ENCODE measurements at regions of chr4 and their contacts with region 1.

Region 1: DNA sequence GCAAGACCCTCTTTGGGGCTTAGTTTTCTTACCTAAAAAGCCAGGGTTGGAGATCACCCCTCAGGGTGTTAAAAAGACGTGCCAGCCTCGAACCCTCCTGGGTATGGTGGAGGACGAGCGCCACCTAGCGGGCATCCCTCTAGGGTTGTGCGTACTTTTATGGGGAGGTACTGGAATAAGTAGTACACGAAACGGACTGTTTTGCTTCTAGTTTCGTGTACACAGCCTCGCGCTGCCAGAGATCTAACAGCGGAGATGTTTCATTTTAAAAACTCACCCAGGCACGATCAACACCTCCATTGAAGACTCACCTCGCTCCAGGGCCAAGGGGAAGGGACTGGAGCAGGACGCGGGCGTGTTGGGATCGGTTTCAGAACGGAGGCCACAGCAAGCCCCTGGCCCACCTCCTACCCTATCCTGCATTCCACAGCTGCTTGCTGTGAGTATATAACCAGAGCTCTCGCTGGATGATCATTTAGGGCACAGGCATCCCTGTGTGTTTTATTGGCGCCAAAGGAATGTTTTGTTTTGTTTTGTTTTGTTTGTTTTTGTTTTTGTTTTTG is 4.8 kb upstream of the NKX3-2 start:
- DNase-seq: peak; percentile 75
- H3K4me3 Mint-ChIP-seq: peak overlapping the region; percentile 70
- H3K27ac Mint-ChIP-seq: no peak overlapping the region
- H3K4me1 Mint-ChIP-seq: peaks cover 28% of the 10 kb centered on the region
- H3K27me3 Mint-ChIP-seq: peaks cover 56% of the 10 kb centered on the region

Region 2: DNA sequence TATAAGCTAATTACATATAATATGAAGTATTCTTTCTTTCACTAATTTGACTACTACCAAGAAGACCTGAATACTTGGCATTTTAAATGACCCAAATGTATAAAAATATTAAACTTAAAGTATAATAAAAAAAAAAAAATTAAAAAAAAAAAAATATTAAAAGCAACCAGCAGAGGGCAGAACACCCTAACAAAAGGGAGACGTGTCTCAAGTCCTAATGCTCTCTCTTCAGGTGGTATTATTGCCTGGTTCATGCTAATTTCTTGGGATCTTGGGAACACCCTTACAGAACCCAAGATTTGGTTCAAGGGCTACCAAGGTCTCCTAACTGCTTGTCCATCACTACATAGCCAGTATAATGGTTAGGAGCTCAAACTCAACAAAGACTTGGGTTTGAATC is 819.7 kb before region 1 on chr4:
- intact Hi-C with region 1: loop called (anchors 1 kb)
- DNase-seq: no peak
- H3K4me3 Mint-ChIP-seq: no peak overlapping the region
- H3K27ac Mint-ChIP-seq: no peak overlapping the region
- H3K4me1 Mint-ChIP-seq: no peaks in the 10 kb centered on the region
- H3K27me3 Mint-ChIP-seq: peaks cover 1% of the 10 kb centered on the region

Region 3: DNA sequence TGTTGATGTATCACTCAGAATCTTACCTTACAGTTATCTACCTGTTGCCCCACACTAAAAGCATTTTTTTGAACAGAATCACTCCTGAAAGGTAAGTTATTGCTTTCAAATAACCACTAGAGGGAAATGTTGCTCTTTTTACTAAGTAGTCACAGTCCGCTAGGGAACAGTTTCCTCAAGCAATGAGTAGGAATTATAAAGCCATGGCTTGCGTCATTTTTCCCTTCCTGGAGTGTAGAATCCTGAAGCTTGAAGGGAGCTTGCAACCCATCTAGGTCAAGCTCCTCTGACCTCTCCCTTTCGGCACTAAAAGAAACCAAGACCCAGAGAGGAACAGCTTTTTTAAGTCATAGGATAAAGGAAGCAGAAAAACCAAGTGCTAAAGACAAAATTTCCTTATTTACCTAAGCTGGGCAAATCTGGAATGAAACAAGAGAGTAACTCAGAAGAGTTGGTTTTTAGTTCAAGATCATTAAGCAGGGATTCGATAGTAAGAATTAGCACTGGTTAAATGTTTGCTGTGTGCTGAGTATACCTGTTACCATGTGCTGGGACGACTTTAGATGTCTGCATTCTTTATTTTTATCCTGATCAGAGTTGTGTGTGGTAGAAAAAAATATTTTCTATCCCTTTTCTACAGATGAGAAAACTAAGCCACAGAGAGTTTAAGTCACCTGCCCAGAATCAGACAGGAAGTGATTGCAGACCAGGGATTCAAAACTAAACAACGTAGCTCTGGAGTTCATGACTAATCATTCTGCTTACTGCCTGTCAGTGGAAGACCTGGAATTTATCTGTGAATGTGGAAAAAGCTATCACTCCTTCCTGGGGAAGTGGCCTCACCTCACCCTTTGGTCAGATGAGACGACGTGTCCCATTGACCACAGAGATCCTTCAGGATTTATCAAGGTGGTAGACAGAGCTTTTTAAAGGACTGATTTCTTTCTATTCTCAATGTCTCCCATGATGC is 696.4 kb before region 1 on chr4:
- intact Hi-C with region 1: loop called (anchors 1 kb)
- DNase-seq: no peak
- H3K4me3 Mint-ChIP-seq: no peak overlapping the region
- H3K27ac Mint-ChIP-seq: no peak overlapping the region
- H3K4me1 Mint-ChIP-seq: no peaks in the 10 kb centered on the region
- H3K27me3 Mint-ChIP-seq: peaks cover 4% of the 10 kb centered on the region

Region 4: DNA sequence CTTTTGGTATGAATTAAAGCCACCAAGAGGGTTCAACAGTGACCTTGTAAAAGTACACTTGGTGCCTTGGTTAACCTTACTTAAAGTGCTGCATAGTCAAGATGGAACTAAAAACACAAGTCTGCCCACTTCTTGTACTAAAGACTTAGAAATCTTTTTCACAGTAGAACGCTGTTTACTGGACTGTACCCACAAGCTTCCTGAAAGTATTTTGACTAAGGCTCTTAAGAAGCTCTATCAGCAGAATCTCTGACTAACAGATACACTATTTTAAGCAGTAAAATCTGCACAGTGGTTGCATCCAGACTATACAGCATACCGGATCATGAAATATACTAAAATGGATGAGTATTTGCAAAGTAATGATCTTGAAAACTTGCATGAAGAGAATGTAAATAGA is 72.2 kb before region 1 on chr4:
- intact Hi-C with region 1: loop called (anchors 5 kb)
- DNase-seq: no peak
- H3K4me3 Mint-ChIP-seq: peak overlapping the region; percentile 17
- H3K27ac Mint-ChIP-seq: peak overlapping the region; percentile 22
- H3K4me1 Mint-ChIP-seq: peaks cover 25% of the 10 kb centered on the region
- H3K27me3 Mint-ChIP-seq: no peaks in the 10 kb centered on the region

Region 5: GRCh38 chr4:13535708-13536361 is 13.2 kb before region 1 on chr4:
- intact Hi-C with region 1: loop called (anchors 1 kb)
- DNase-seq: no peak
- H3K4me3 Mint-ChIP-seq: no peak overlapping the region
- H3K27ac Mint-ChIP-seq: no peak overlapping the region
- H3K4me1 Mint-ChIP-seq: peaks cover 12% of the 10 kb centered on the region
- H3K27me3 Mint-ChIP-seq: peaks cover 93% of the 10 kb centered on the region

Region 6: DNA sequence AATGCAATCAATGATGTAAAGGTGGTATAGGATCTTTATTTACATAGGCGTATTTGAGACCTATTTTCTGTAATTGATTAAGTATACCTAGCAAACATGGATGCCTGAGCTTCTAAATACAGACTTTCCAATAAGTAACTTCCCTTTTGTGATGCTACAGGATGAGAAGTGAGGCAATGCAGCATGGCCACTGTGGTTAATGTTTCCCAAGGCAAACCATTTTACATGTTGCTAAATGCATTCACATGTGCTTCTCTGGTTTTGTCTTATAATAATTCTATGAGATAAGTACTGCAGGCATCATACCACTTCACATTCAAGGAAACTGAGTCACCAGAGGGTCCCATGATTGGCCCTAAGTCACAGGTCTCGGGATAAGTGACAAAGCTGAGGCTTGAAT is 31.0 kb after region 1 on chr4:
- intact Hi-C with region 1: no loop called
- DNase-seq: no peak
- H3K4me3 Mint-ChIP-seq: no peak overlapping the region
- H3K27ac Mint-ChIP-seq: no peak overlapping the region
- H3K4me1 Mint-ChIP-seq: no peaks in the 10 kb centered on the region
- H3K27me3 Mint-ChIP-seq: no peaks in the 10 kb centered on the region

Region 7: GRCh38 chr4:13601048-13601447 is 52.0 kb after region 1 on chr4:
- intact Hi-C with region 1: no loop called
- DNase-seq: no peak
- H3K4me3 Mint-ChIP-seq: no peak overlapping the region
- H3K27ac Mint-ChIP-seq: no peak overlapping the region
- H3K4me1 Mint-ChIP-seq: no peaks in the 10 kb centered on the region
- H3K27me3 Mint-ChIP-seq: no peaks in the 10 kb centered on the region